B cell (primary cell): ENCODE measurements at regions of chr7 and their contacts with region 1.

Region 1: DNA sequence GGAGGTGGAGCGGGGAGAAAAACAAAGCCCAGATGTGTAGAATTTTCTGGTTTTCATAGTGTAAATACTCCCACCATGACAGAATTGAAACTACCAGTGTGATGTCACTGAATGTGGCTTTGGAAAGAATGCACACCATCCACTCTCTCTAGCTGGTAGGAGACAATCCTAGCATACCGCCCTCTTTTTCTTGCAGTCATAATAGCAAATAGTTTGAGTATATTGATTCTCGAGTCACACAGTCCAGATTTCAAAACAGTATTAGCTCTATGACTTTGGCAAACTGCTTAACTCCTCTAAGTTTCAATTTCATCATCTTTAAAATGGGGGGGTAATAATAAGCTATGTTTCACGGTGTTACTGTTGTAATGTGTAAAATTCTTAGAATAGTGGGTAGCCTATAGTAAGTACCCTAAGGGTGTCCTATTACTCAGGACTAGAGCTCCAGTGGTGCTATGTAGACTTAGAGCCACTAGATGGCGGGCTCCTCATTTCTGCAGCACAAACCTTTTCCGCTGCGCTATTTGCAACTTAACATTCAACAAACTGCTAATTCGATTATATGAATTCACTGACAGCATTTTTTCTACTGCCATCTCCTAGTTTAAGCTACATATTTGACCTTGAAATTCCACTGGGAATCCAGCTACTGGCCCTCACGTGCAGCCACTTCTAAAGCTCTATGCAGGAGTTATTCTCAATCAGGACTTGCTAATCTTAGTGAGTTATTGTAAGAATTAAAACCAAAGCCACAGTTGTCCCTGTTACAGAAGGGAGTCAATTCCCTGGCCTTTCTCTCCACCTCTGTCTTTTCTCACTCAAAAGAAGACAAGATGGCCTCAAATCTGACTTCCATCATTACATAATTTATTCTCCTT is 18.7 kb downstream of the TAS2R40 start:
- DNase-seq: peak; percentile 81
- ATAC-seq: peak; percentile 91
- H3K4me3 ChIP-seq: no peak overlapping the region
- H3K4me3 Mint-ChIP-seq: no peak overlapping the region
- H3K27ac ChIP-seq: no peak overlapping the region
- H3K27ac Mint-ChIP-seq: no peak overlapping the region
- H3K4me1 ChIP-seq: peaks cover 4 to 8% of the 10 kb centered on the region in 2 donors
- H3K4me1 Mint-ChIP-seq: peaks cover 7% of the 10 kb centered on the region
- H3K27me3 ChIP-seq: peaks cover 0 to 3% (median 0%) of the 10 kb centered on the region in 4 experiments
- H3K27me3 Mint-ChIP-seq: peaks cover 27% of the 10 kb centered on the region
- CTCF ChIP-seq: peak; percentile 98

Region 2: GRCh38 chr7:142908921-142909890 is 331.3 kb before region 1 on chr7:
- CTCF ChIA-PET with region 1: no interaction called
- POLR2A ChIA-PET with region 1: no interaction called
- intact Hi-C with region 1: no loop called
- DNase-seq: peak; percentile 31
- ATAC-seq: peak; percentile 51
- H3K4me3 ChIP-seq: no peak overlapping the region
- H3K4me3 Mint-ChIP-seq: no peak overlapping the region
- H3K27ac ChIP-seq: no peak overlapping the region
- H3K27ac Mint-ChIP-seq: no peak overlapping the region
- H3K4me1 ChIP-seq: no peaks in the 10 kb centered on the region
- H3K4me1 Mint-ChIP-seq: no peaks in the 10 kb centered on the region
- H3K27me3 ChIP-seq: peaks cover 0 to 9% (median 3%) of the 10 kb centered on the region in 4 experiments
- H3K27me3 Mint-ChIP-seq: peaks cover 39% of the 10 kb centered on the region
- CTCF ChIP-seq: peak; percentile 29

Region 3: GRCh38 chr7:143214789-143215679 is 25.5 kb before region 1 on chr7:
- CTCF ChIA-PET with region 1: interaction called, 26 read pairs
- POLR2A ChIA-PET with region 1: no interaction called
- intact Hi-C with region 1: no loop called
- DNase-seq: peak; percentile 90
- ATAC-seq: peak; percentile 97
- H3K4me3 ChIP-seq: no peak overlapping the region
- H3K4me3 Mint-ChIP-seq: no peak overlapping the region
- H3K27ac ChIP-seq: no peak overlapping the region
- H3K27ac Mint-ChIP-seq: no peak overlapping the region
- H3K4me1 ChIP-seq: peaks cover 8 to 12% of the 10 kb centered on the region in 2 donors
- H3K4me1 Mint-ChIP-seq: peaks cover 15% of the 10 kb centered on the region
- H3K27me3 ChIP-seq: no peaks in the 10 kb centered on the region
- H3K27me3 Mint-ChIP-seq: peaks cover 3% of the 10 kb centered on the region
- CTCF ChIP-seq: peak; percentile 100

Region 4: DNA sequence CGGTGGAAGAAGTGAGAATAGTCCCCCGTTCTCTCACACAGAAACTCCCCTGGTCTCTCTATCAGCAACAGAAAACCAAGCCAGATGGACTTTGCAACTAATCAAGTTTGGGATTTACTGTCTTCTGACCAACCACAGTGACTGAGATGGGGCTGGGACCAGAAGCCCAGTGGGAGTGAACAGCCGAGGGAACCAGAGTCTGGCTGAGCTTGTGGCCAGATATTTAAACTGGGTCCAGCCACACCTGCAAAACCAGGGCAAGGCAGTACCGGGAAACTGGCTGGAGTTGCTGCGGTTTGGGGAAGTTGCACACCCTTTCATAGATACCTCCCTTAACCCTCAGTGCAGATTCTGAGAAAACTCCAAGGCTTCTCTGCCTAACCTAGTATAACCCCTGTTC is 28.7 kb after region 1 on chr7:
- CTCF ChIA-PET with region 1: interaction called, 35 read pairs
- POLR2A ChIA-PET with region 1: no interaction called
- intact Hi-C with region 1: no loop called
- DNase-seq: no peak
- ATAC-seq: no peak
- H3K4me3 ChIP-seq: no peak overlapping the region
- H3K4me3 Mint-ChIP-seq: no peak overlapping the region
- H3K27ac ChIP-seq: peak overlapping the region in 1 of 2 donors; percentile 42
- H3K27ac Mint-ChIP-seq: peak overlapping the region; percentile 26
- H3K4me1 ChIP-seq: peaks cover 13 to 17% of the 10 kb centered on the region in 2 donors
- H3K4me1 Mint-ChIP-seq: peaks cover 21% of the 10 kb centered on the region
- H3K27me3 ChIP-seq: no peaks in the 10 kb centered on the region
- H3K27me3 Mint-ChIP-seq: no peaks in the 10 kb centered on the region
- CTCF ChIP-seq: no peak

Region 5: DNA sequence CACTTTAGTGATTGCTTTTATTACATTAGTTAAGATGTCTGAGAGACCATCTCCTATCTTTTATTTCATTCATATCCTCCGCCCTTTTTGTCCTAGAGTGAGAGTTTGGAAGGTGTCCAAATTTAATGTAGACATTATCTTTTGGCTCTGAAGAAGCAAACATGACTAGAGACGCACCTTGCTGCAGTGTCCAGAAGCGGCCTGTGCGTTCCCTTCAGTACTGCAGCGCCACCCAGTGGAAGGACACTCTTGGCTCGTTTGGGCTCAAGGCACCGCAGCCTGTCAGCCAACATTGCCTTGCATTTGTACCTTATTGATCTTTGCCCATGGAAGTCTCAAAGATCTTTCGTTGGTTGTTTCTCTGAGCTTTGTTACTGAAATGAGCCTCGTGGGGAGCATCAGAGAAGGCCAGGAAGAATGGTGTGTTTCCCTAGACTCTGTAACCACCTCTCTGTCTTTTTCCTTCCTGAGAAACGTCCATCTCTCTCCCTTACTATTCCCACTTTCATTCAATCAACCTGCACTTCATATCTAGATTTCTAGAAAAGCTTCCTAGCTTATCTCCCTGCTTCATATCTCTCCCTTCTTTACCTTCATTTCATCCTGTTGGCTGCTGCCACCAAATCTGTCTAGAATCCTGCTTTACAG is 65.0 kb after region 1 on chr7:
- CTCF ChIA-PET with region 1: interaction called, 112 read pairs
- POLR2A ChIA-PET with region 1: no interaction called
- intact Hi-C with region 1: loop called (anchors 1 kb)
- DNase-seq: peak; percentile 57
- ATAC-seq: peak; percentile 61
- H3K4me3 ChIP-seq: no peak overlapping the region
- H3K4me3 Mint-ChIP-seq: no peak overlapping the region
- H3K27ac ChIP-seq: no peak overlapping the region
- H3K27ac Mint-ChIP-seq: no peak overlapping the region
- H3K4me1 ChIP-seq: peaks cover 4% of the 10 kb centered on the region in 2 donors
- H3K4me1 Mint-ChIP-seq: peaks cover 11% of the 10 kb centered on the region
- H3K27me3 ChIP-seq: no peaks in the 10 kb centered on the region
- H3K27me3 Mint-ChIP-seq: no peaks in the 10 kb centered on the region
- CTCF ChIP-seq: peak; percentile 69

Region 6: DNA sequence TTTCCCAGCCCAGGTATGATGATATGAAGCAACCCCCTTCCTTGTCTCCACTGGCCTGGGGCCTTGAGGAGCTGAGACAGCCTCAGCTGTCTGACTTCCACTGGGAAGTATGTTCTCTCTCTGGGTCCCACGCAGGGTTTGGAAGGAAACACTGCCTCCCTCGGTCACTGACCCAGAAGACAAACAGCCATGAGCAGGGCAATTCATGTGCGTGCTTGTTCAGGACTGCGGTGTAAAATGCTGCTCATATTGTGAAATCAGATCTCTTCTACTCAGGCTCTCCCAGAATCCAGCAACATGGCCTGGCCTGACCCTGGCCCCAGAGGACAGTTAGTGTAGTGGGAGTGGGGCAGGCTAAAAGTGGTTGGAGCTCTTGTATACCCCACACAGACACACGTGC is 78.1 kb after region 1 on chr7:
- CTCF ChIA-PET with region 1: no interaction called
- POLR2A ChIA-PET with region 1: no interaction called
- intact Hi-C with region 1: no loop called
- DNase-seq: no peak
- ATAC-seq: no peak
- H3K4me3 ChIP-seq: no peak overlapping the region
- H3K4me3 Mint-ChIP-seq: no peak overlapping the region
- H3K27ac ChIP-seq: no peak overlapping the region
- H3K27ac Mint-ChIP-seq: no peak overlapping the region
- H3K4me1 ChIP-seq: no peaks in the 10 kb centered on the region
- H3K4me1 Mint-ChIP-seq: no peaks in the 10 kb centered on the region
- H3K27me3 ChIP-seq: no peaks in the 10 kb centered on the region
- H3K27me3 Mint-ChIP-seq: no peaks in the 10 kb centered on the region
- CTCF ChIP-seq: no peak

Region 7: GRCh38 chr7:143372070-143372469 is 131.5 kb after region 1 on chr7:
- CTCF ChIA-PET with region 1: interaction called, 19 read pairs
- POLR2A ChIA-PET with region 1: no interaction called
- intact Hi-C with region 1: no loop called
- DNase-seq: no peak
- ATAC-seq: no peak
- H3K4me3 ChIP-seq: no peak overlapping the region
- H3K4me3 Mint-ChIP-seq: no peak overlapping the region
- H3K27ac ChIP-seq: no peak overlapping the region
- H3K27ac Mint-ChIP-seq: peak overlapping the region; percentile 54
- H3K4me1 ChIP-seq: peaks cover 22 to 28% of the 10 kb centered on the region in 2 donors
- H3K4me1 Mint-ChIP-seq: peaks cover 31% of the 10 kb centered on the region
- H3K27me3 ChIP-seq: peaks cover 0 to 10% (median under 1%) of the 10 kb centered on the region in 4 experiments
- H3K27me3 Mint-ChIP-seq: peaks cover 16% of the 10 kb centered on the region
- CTCF ChIP-seq: no peak

Region 8: DNA sequence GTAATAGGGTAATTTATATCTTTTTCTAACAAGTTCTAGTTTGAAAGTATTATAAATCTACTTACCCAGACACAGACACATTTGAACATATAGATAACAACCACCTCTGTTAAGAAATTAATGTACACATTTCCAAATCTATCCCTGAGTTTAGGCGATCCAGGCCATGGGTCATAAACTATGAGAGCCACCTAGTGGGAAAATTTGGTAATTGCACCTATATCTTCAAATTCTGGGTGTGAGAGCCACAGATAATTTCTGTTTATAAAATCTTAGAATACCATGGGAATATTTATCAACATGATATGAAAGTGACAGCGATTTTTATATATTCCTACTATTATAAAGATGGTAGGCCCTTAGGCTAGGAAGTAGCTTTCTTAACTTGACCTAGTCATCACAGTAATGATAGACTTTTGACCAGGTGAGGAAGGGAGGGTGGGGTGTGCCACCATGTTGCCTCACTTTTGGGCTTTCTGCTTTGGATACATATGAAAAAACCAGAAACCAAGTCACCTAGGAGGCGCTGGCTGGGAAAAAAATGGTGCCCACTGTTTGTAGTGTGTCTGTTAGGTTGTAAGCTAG is 176.1 kb after region 1 on chr7:
- CTCF ChIA-PET with region 1: interaction called, 172 read pairs
- POLR2A ChIA-PET with region 1: no interaction called
- intact Hi-C with region 1: loop called (anchors 1 kb)
- DNase-seq: peak; percentile 65
- ATAC-seq: peak; percentile 63
- H3K4me3 ChIP-seq: no peak overlapping the region
- H3K4me3 Mint-ChIP-seq: no peak overlapping the region
- H3K27ac ChIP-seq: no peak overlapping the region
- H3K27ac Mint-ChIP-seq: no peak overlapping the region
- H3K4me1 ChIP-seq: no peaks in the 10 kb centered on the region
- H3K4me1 Mint-ChIP-seq: no peaks in the 10 kb centered on the region
- H3K27me3 ChIP-seq: peaks cover 0 to 33% (median 17%) of the 10 kb centered on the region in 4 experiments
- H3K27me3 Mint-ChIP-seq: peaks cover 54% of the 10 kb centered on the region
- CTCF ChIP-seq: peak; percentile 87

Region 9: GRCh38 chr7:143519411-143520131 is 279.0 kb after region 1 on chr7:
- CTCF ChIA-PET with region 1: no interaction called
- POLR2A ChIA-PET with region 1: no interaction called
- intact Hi-C with region 1: no loop called
- DNase-seq: no peak
- ATAC-seq: no peak
- H3K4me3 ChIP-seq: no peak overlapping the region
- H3K4me3 Mint-ChIP-seq: no peak overlapping the region
- H3K27ac ChIP-seq: no peak overlapping the region
- H3K27ac Mint-ChIP-seq: no peak overlapping the region
- H3K4me1 ChIP-seq: no peaks in the 10 kb centered on the region
- H3K4me1 Mint-ChIP-seq: no peaks in the 10 kb centered on the region
- H3K27me3 ChIP-seq: peaks cover 0 to 8% (median 0%) of the 10 kb centered on the region in 4 experiments
- H3K27me3 Mint-ChIP-seq: peaks cover 33% of the 10 kb centered on the region
- CTCF ChIP-seq: no peak

Region 10: GRCh38 chr7:143728333-143728862 is 487.9 kb after region 1 on chr7:
- CTCF ChIA-PET with region 1: no interaction called
- POLR2A ChIA-PET with region 1: no interaction called
- intact Hi-C with region 1: no loop called
- DNase-seq: no peak
- ATAC-seq: no peak
- H3K4me3 ChIP-seq: no peak overlapping the region
- H3K4me3 Mint-ChIP-seq: no peak overlapping the region
- H3K27ac ChIP-seq: no peak overlapping the region
- H3K27ac Mint-ChIP-seq: no peak overlapping the region
- H3K4me1 ChIP-seq: no peaks in the 10 kb centered on the region
- H3K4me1 Mint-ChIP-seq: no peaks in the 10 kb centered on the region
- H3K27me3 ChIP-seq: no peaks in the 10 kb centered on the region
- H3K27me3 Mint-ChIP-seq: no peaks in the 10 kb centered on the region
- CTCF ChIP-seq: no peak

Region 11: DNA sequence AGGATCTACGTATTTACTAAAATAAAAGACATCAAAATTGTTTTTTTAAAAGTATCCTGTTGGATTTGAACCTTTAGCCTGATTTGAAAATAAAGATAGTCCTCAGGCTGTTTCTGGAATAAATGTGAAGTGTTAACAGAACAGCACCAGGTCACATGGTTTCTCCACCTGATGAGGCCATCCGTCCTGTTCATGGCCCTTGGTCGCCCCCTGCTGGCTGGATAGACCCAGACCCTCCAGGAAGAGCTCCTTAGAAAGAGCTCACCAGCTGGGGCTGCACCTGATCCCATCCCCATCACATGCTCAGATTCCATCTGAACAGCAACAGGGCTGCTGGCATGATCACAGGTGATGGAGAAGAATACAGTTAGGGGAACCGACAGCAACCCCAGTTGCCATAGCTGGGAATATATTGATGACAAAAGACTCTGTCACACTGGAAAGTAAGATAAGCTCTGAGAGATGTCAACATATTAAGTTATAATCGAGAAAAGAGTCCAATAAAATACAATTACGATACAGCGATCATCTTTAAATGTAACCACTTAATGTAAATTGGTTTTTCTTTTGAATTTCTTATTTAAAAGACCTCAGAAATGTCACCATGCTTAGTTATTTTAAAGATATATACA is 887.3 kb after region 1 on chr7:
- CTCF ChIA-PET with region 1: interaction called, 14 read pairs
- POLR2A ChIA-PET with region 1: no interaction called
- intact Hi-C with region 1: no loop called
- DNase-seq: peak; percentile 82
- ATAC-seq: peak; percentile 98
- H3K4me3 ChIP-seq: no peak overlapping the region
- H3K4me3 Mint-ChIP-seq: no peak overlapping the region
- H3K27ac ChIP-seq: no peak overlapping the region
- H3K27ac Mint-ChIP-seq: no peak overlapping the region
- H3K4me1 ChIP-seq: no peaks in the 10 kb centered on the region
- H3K4me1 Mint-ChIP-seq: no peaks in the 10 kb centered on the region
- H3K27me3 ChIP-seq: no peaks in the 10 kb centered on the region
- H3K27me3 Mint-ChIP-seq: peaks cover 5% of the 10 kb centered on the region
- CTCF ChIP-seq: peak; percentile 89